ENCODE measurements at regions of chr5 and their contacts with region 1.

Region 1: GRCh38 chr5:129904102-129904666 is at the start of gene CHSY3:
- DNase-seq: no peak
- H3K4me3 ChIP-seq: peak within 1 kb of the TSS; percentile 58
- H3K27me3 ChIP-seq: peaks cover 4% of the 10 kb centered on the region
- CTCF ChIP-seq: no peak
- polyA plus RNA-seq, gene CHSY3: 0.91 and 1.2 TPM in 2 replicates

Region 2: GRCh38 chr5:130141659-130142320 is 237.6 kb after region 1 on chr5:
- CTCF ChIA-PET with region 1: interaction called, 24 read pairs
- POLR2A ChIA-PET with region 1: no interaction called
- DNase-seq: no peak
- H3K4me3 ChIP-seq: no peak overlapping the region
- H3K27me3 ChIP-seq: no peaks in the 10 kb centered on the region
- CTCF ChIP-seq: peak; percentile 88